ENCODE measurements at regions of chr12 and their contacts with region 1.

Region 1: DNA sequence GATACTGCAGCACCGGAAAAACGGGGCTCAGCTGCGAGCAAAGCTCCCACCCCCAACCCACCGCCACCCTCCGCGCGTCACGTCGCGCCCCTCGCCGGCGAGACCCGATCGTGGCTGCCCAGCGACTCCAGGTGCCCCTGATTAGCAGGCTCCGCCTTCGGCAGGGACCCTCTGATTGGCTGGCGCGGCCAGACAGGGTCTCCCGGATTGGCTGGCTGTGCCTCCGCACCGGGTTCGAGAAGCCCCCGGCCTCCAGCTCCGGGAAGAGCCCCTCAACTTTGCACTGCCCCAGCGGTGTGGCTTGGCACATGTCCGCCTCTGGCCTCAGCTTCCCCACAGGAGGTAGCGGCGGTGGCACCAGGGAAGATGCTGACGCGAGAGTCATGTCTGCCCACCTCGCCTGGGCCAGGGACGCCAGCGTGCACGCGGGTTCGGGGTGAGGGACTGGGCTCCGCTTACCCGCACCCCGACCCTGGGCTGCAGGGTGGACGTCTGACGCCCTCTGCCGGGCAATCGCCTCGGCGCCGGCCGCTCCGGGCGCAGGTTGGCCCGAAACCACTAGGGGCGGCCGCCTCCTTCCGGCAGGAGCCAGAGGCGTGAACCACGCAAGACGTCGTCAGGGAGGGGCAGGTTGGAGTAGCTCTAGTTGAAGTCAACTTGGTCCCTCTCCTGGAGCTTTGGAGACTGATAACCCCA is 498 bp upstream of the RHOF start:
- DNase-seq: peak; percentile 94
- H3K4me3 ChIP-seq: peak overlapping the region; percentile 22 to 43 (median 43)
- H3K27ac ChIP-seq: peak overlapping the region; percentile 1
- H3K4me1 ChIP-seq: peaks cover 45% of the 10 kb centered on the region
- H3K27me3 ChIP-seq: no peaks in the 10 kb centered on the region
- CTCF ChIP-seq: peak; percentile 100
- POLR2A ChIP-seq: peak; percentile 80

Region 2: GRCh38 chr12:121550974-121551634 is 242.9 kb before region 1 on chr12:
- CTCF ChIA-PET with region 1: interaction called, 12 read pairs
- POLR2A ChIA-PET with region 1: no interaction called
- dilution Hi-C with region 1: no loop called
- intact Hi-C with region 1: no loop called
- DNase-seq: no peak
- H3K4me3 ChIP-seq: no peak overlapping the region
- H3K27ac ChIP-seq: no peak overlapping the region
- H3K4me1 ChIP-seq: no peaks in the 10 kb centered on the region
- H3K27me3 ChIP-seq: no peaks in the 10 kb centered on the region
- CTCF ChIP-seq: no peak
- POLR2A ChIP-seq: no peak

Region 3: GRCh38 chr12:121568971-121569751 is 224.8 kb before region 1 on chr12:
- CTCF ChIA-PET with region 1: no interaction called
- POLR2A ChIA-PET with region 1: no interaction called
- dilution Hi-C with region 1: no loop called
- intact Hi-C with region 1: no loop called
- DNase-seq: no peak
- H3K4me3 ChIP-seq: no peak overlapping the region
- H3K27ac ChIP-seq: no peak overlapping the region
- H3K4me1 ChIP-seq: no peaks in the 10 kb centered on the region
- H3K27me3 ChIP-seq: no peaks in the 10 kb centered on the region
- CTCF ChIP-seq: no peak
- POLR2A ChIP-seq: no peak

Region 4: DNA sequence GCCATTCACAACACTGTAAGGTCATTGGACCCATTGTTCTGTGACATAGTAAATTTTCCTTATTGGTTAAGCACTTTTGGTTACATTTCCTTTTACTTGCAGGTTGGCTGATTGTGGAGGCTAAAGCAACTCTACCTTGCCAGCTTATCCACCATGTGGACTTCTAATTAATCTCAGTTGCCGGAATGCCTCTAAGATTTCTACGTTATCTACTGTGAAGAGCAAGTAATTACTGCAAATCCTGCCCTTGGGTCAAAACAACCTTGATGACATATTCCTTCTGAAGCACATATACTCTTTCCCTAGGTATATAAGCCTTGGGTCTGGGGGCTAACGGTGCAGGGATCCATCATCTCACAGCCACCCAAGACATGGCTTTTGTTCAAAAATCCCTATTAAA is 105.0 kb before region 1 on chr12:
- CTCF ChIA-PET with region 1: interaction called, 17 read pairs
- POLR2A ChIA-PET with region 1: no interaction called
- dilution Hi-C with region 1: no loop called
- intact Hi-C with region 1: no loop called
- DNase-seq: no peak
- H3K4me3 ChIP-seq: no peak overlapping the region
- H3K27ac ChIP-seq: no peak overlapping the region
- H3K4me1 ChIP-seq: no peaks in the 10 kb centered on the region
- H3K27me3 ChIP-seq: no peaks in the 10 kb centered on the region
- CTCF ChIP-seq: no peak
- POLR2A ChIP-seq: no peak

Region 5: GRCh38 chr12:121712461-121713256 is 81.3 kb before region 1 on chr12 and contains the start of gene TMEM120B:
- CTCF ChIA-PET with region 1: interaction called, 47 read pairs
- POLR2A ChIA-PET with region 1: no interaction called
- dilution Hi-C with region 1: no loop called
- intact Hi-C with region 1: no loop called
- DNase-seq: peak; percentile 76
- H3K4me3 ChIP-seq: peak within 1 kb of the TSS; percentile 61 to 95 (median 91)
- H3K27ac ChIP-seq: peak within 1 kb of the TSS; percentile 75
- H3K4me1 ChIP-seq: peaks cover 18% of the 10 kb centered on the region
- H3K27me3 ChIP-seq: no peaks in the 10 kb centered on the region
- CTCF ChIP-seq: peak in 1 of 2 donors; percentile 15
- POLR2A ChIP-seq: peak; percentile 94
- total RNA-seq, gene TMEM120B: 12.8 and 15.9 TPM in 2 replicates

Region 6: GRCh38 chr12:121773011-121773777 is 20.8 kb before region 1 on chr12:
- CTCF ChIA-PET with region 1: interaction called, 173 read pairs
- POLR2A ChIA-PET with region 1: interaction called, 10 read pairs
- dilution Hi-C with region 1: no loop called
- intact Hi-C with region 1: loop called (anchors 1 kb)
- DNase-seq: peak; percentile 40
- H3K4me3 ChIP-seq: no peak overlapping the region
- H3K27ac ChIP-seq: no peak overlapping the region
- H3K4me1 ChIP-seq: no peaks in the 10 kb centered on the region
- H3K27me3 ChIP-seq: no peaks in the 10 kb centered on the region
- CTCF ChIP-seq: peak; percentile 80
- POLR2A ChIP-seq: no peak

Region 7: GRCh38 chr12:121839106-121839992 is 45.4 kb after region 1 on chr12:
- CTCF ChIA-PET with region 1: interaction called, 73 read pairs
- POLR2A ChIA-PET with region 1: no interaction called
- dilution Hi-C with region 1: no loop called
- intact Hi-C with region 1: loop called (anchors 2 kb)
- DNase-seq: peak; percentile 99
- H3K4me3 ChIP-seq: peak overlapping the region; percentile 47 to 56 (median 53)
- H3K27ac ChIP-seq: no peak overlapping the region
- H3K4me1 ChIP-seq: peaks cover 2% of the 10 kb centered on the region
- H3K27me3 ChIP-seq: no peaks in the 10 kb centered on the region
- CTCF ChIP-seq: peak; percentile 38 to 63
- POLR2A ChIP-seq: peak; percentile 26